ENCODE measurements at regions of chr1 and their contacts with region 1.

Region 1: DNA sequence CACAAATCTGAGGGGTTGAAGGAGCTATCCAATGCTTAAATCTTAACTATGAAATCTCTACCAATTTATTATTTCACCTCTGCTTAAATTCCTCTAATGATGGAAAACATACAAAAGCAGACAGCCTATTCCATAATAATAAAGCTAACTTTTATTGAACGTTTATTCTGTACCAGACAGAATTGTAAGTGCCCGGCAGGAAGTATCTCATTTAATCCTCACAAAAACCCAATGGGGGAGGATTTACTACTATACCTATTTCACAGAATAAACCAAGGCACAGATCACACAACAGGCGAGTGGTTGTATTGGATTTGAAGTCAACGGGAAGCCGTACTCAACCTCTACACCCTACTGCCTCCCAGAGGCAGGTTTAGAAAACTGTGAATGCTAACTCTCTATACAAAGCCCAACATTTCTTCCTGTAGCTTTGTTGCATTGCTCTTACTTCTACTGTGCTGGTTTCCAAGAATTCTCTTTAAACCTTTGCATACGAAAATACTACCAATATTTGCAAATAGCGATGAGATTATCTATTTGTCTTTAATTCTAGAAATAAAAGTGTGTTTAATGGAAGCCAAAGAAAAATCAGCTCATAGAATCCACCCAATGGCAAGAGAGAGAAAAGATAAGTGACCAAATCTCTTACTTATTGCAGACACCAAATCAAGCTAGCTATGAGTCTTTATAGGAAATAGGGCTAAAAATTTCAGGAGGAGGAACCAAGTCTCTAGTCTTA is 33.5 kb upstream of the C1orf53 start:
- DNase-seq: no peak

Region 2: GRCh38 chr1:197614916-197615692 is 253.8 kb before region 1 on chr1:
- intact Hi-C with region 1: loop called (anchors 5 kb)
- DNase-seq: no peak

Region 3: DNA sequence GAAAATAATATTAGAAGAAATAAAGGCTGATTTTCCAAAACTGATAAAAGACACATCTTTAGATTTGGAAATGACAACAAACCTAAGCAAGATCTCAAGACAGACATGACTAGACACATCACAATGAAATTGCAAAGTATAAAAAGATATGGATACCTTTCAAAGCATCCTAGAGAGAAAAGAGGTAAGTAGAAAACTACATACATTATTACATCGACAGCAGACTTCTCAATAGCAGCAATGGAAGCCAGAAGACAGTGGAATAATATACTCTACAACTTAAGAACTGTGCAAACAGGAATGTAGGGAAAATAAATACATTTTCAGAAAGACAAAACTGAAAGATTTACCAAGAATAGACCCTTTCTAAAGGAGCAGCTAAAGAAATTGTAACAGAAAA is 143.9 kb before region 1 on chr1:
- intact Hi-C with region 1: no loop called
- DNase-seq: no peak